Gastrocnemius medialis (tissue), 4 donors: ENCODE measurements at regions of chr1 and their contacts with region 1.

Region 1: DNA sequence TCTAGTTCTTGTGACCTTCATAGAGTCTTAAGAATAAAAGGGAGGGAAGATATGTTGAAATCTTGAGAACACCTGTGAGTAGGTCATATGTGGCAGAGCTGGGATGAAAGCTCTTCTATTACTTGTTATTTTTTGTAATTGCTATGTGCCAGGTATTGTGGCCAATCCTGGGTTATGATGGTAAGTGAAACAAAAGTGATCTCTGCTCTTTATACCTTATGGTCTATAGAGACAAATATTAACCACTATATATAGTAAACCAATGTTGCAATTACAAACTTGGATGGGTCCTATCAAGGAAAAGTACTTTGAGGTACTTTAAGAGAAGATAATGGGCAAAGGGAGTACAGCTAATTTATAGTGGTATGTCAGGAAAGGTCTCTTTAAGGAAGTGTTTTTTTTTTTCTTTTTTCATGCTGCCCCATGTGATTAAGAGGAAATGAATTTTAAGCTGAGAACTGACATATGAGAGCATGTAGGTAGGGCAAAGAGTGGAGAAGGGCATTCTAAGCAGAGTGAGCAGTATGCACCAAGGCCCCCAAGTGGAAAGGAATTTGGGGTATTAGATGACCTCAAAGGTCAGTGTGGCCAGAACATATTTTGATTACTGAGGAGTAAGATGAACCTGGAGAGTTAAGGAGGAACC is 43.3 kb downstream of the POU2F1 start:
- DNase-seq: no peak
- ATAC-seq: no peak
- H3K4me3 ChIP-seq: no peak overlapping the region
- H3K27ac ChIP-seq: peak overlapping the region in 1 of 4 donors; percentile 19
- H3K4me1 ChIP-seq: peaks cover 58 to 62% of the 10 kb centered on the region in 2 donors
- H3K27me3 ChIP-seq: no peaks in the 10 kb centered on the region
- CTCF ChIP-seq: no peak
- POLR2A ChIP-seq: no peak

Region 2: DNA sequence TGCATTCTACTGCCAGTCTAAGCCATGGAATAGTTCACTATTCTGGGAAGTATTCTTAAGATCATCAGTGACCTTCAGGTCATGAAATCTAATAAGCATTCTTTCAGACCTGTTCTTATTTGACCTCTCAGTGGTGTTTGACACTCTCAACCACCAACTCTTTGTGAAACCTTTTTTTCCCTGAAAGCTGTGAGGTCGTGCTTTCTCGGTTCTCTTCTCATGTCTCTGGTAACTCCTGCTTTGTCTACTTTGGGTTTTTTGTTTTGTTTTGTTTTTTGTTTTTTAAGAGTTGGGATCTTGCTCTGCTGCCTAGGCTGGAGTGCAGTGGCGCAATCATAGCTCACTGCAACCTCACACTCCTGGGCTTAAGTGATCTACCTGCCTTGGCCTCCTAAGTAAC is 13.0 kb after region 1 on chr1:
- in situ Hi-C with region 1: no loop called
- intact Hi-C with region 1: no loop called
- DNase-seq: no peak
- ATAC-seq: no peak
- H3K4me3 ChIP-seq: no peak overlapping the region
- H3K27ac ChIP-seq: no peak overlapping the region
- H3K4me1 ChIP-seq: peaks cover 43 to 61% of the 10 kb centered on the region in 2 donors
- H3K27me3 ChIP-seq: no peaks in the 10 kb centered on the region
- CTCF ChIP-seq: no peak
- POLR2A ChIP-seq: no peak

Region 3: GRCh38 chr1:167342846-167343245 is 78.9 kb after region 1 on chr1:
- in situ Hi-C with region 1: no loop called
- intact Hi-C with region 1: loop called (anchors 5 kb)
- DNase-seq: no peak
- ATAC-seq: no peak
- H3K4me3 ChIP-seq: no peak overlapping the region
- H3K27ac ChIP-seq: no peak overlapping the region
- H3K4me1 ChIP-seq: peaks cover 9% of the 10 kb centered on the region in 2 donors
- H3K27me3 ChIP-seq: no peaks in the 10 kb centered on the region
- CTCF ChIP-seq: no peak
- POLR2A ChIP-seq: no peak

Region 4: GRCh38 chr1:167442124-167442848 is 178.3 kb after region 1 on chr1:
- in situ Hi-C with region 1: loop called (anchors 5 to 10 kb)
- intact Hi-C with region 1: loop called (anchors 1 kb)
- DNase-seq: peak; percentile 42 to 77
- ATAC-seq: peak; percentile 81 to 94
- H3K4me3 ChIP-seq: no peak overlapping the region
- H3K27ac ChIP-seq: no peak overlapping the region
- H3K4me1 ChIP-seq: peaks cover 0 to 12% of the 10 kb centered on the region in 2 donors
- H3K27me3 ChIP-seq: peaks cover 0 to 7% (median 0%) of the 10 kb centered on the region in 3 donors
- CTCF ChIP-seq: peak; percentile 74 to 91 (median 82)
- POLR2A ChIP-seq: no peak

Region 5: DNA sequence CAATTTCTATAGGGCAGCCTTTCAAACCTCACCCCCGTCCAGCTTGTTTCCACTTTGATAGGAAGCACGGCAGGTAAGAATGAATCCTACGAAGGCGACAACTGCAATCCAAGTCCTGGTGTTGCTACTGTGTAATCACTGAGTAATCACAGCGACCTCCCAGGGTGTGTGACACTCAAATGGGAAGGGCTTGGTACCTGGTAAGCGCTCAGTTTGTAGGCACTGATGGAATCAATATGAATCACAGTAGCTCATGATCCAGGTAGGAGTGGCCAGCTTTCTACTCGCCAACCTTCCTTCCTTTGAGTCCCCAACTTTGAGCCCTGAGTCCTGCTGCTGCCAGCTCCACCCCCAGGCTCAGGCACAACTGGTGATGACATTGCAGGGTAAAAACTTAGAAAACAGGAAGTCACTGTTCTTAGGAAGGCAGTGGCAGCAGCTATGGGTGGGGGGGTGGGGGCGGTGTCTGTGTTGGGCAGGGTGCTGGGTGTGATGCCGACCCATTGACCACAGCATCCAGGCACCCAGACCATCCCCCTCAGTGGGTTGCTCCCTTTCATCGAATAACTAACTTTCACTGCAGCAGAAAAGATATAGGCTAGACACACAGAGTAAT is 183.7 kb after region 1 on chr1:
- in situ Hi-C with region 1: loop called (anchors 5 to 10 kb)
- intact Hi-C with region 1: loop called (anchors 1 kb)
- DNase-seq: no peak
- ATAC-seq: no peak
- H3K4me3 ChIP-seq: no peak overlapping the region
- H3K27ac ChIP-seq: no peak overlapping the region
- H3K4me1 ChIP-seq: no peaks in the 10 kb centered on the region
- H3K27me3 ChIP-seq: no peaks in the 10 kb centered on the region
- CTCF ChIP-seq: no peak
- POLR2A ChIP-seq: no peak

Region 6: GRCh38 chr1:167533851-167534300 is 269.9 kb after region 1 on chr1:
- in situ Hi-C with region 1: loop called in 3 of 4 experiments (anchors 25 kb)
- intact Hi-C with region 1: loop called (anchors 5 kb)
- DNase-seq: no peak
- ATAC-seq: peak; percentile 81 to 88
- H3K4me3 ChIP-seq: no peak overlapping the region
- H3K27ac ChIP-seq: no peak overlapping the region
- H3K4me1 ChIP-seq: no peaks in the 10 kb centered on the region
- H3K27me3 ChIP-seq: no peaks in the 10 kb centered on the region
- CTCF ChIP-seq: peak; percentile 62 to 88 (median 77)
- POLR2A ChIP-seq: no peak

Region 7: DNA sequence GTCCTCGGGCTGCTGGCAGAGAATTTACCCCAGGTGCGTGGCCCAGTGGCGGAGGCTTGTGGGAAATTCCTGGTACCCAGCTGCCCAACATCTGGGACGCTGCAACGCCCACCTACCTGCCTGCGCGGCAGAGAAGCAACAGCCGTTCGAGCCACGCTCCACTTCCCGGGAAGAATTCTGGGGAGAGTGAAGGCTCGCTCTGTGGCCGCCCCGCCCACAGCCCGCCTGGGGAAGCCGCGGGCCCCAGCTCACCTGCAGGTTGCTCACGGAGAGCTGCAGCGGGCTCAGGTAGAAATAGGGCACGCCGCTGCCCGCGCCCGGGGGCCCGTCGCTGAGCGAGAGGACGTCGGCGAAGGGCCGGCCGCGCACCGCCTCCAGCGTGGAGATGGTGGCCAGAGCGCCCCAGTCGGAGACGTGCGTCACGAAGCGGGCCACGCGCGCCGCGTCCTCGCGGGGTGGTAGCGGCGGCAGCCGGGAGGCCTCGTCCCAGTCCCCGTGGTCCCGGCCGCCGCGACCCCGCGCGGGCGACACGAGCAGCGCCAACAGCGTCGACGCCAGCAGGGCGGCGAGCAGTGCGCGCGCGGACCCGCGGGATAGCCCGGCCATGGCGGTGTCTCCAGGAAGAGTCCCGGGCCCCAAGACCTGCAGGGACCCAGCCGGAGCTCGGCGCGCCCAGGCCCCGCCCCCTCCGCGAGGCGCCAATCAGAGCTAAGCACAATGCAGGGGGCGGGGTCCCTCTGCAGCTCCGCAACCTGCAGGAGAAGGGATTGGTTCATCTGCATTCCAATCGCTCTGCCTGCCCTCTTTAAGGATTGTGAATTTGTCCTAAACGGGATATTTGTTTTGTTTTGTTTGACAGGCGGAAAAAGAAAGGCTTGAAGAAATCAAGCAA is 289.4 kb after region 1 on chr1 and contains the start of gene CREG1:
- in situ Hi-C with region 1: loop called in 3 of 4 experiments (anchors 25 kb)
- intact Hi-C with region 1: loop called (anchors 10 kb)
- DNase-seq: peak; percentile 90 to 94
- ATAC-seq: peak; percentile 88 to 91
- H3K4me3 ChIP-seq: peak within 1 kb of the TSS; percentile 66 to 89 (median 74)
- H3K27ac ChIP-seq: peak within 1 kb of the TSS; percentile 66 to 91 (median 82)
- H3K4me1 ChIP-seq: peaks cover 35 to 49% of the 10 kb centered on the region in 2 donors
- H3K27me3 ChIP-seq: no peaks in the 10 kb centered on the region
- CTCF ChIP-seq: peak in 1 of 5 experiments; percentile 14
- POLR2A ChIP-seq: peak; percentile 95 to 96
- total RNA-seq, gene CREG1: 69.9 to 99.6 (median 80.7) TPM